ENCODE measurements at regions of chr11 and their contacts with region 1.

Region 1: GRCh38 chr11:18540207-18541009 is 13.7 kb upstream of the TSG101 start:
- DNase-seq: peak in 2 of 9 experiments; percentile 52 to 64
- ATAC-seq: peak; percentile 63
- H3K4me3 ChIP-seq: no peak overlapping the region
- H3K4me3 Mint-ChIP-seq: no peak overlapping the region
- H3K27ac ChIP-seq: no peak overlapping the region
- H3K27ac Mint-ChIP-seq: no peak overlapping the region
- H3K4me1 ChIP-seq: no peaks in the 10 kb centered on the region
- H3K4me1 Mint-ChIP-seq: no peaks in the 10 kb centered on the region
- H3K27me3 ChIP-seq: no peaks in the 10 kb centered on the region
- H3K27me3 Mint-ChIP-seq: no peaks in the 10 kb centered on the region
- CTCF ChIP-seq: peak; percentile 59

Region 2: DNA sequence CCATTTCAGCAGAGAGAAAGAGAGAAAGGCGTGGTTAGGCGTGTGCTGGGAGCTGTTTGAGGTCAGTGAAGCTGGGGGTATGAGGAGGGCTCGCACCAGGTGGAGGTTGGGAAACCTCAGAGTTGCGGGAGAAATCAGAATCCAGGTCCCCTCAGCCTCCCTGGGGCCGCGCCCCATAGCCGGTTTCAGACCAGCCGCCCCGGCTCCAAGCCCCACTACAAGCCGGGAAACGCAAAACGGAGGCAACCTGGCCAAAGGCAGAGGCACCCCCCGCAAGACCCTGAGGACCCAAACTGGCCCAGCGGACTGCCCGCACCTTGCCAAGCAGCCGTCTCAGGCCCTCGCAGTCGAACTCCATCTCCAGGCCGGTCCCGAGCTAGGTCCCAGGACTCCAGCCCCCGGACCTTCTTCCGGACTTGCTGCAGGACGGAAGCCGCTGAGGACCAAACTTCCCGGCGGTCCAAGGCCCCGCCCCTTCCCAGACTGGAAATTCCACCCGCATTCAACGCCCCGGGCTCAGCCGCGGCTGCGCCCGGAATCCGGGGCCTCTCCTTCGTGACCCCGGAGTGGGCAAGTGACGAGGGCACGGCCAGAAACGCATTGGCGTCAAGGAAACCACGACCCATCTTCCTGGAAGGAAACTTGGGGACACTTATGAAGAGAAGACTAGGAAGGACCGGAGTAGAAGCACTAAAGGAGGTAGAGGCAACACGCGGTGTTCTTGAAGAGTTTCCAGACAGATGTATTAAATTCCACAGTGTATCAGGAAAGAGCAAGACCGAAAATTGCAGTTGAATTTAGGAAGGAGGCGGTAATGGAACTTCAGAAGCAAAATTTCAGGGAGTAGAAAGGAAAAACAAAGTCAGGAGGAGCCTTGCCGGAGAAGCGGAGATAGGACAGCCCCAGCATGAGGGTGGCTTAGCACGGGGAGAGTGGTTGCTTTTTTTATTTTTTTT is 48.2 kb after region 1 on chr11 and contains the start of gene UEVLD:
- CTCF ChIA-PET with region 1: interaction called, 4 read pairs
- POLR2A ChIA-PET with region 1: no interaction called
- intact Hi-C with region 1: loop called in 1 of 2 experiments (anchors 5 kb)
- DNase-seq: peak; percentile 5 to 85 (median 44)
- ATAC-seq: peak; percentile 55
- H3K4me3 ChIP-seq: peak within 1 kb of the TSS; percentile 75 to 92
- H3K4me3 Mint-ChIP-seq: no peak within 1 kb of the TSS
- H3K27ac ChIP-seq: peak within 1 kb of the TSS; percentile 57 to 92
- H3K27ac Mint-ChIP-seq: no peak within 1 kb of the TSS
- H3K4me1 ChIP-seq: peaks cover 17% of the 10 kb centered on the region
- H3K4me1 Mint-ChIP-seq: peaks cover 10% of the 10 kb centered on the region
- H3K27me3 ChIP-seq: no peaks in the 10 kb centered on the region
- H3K27me3 Mint-ChIP-seq: no peaks in the 10 kb centered on the region
- CTCF ChIP-seq: no peak
- total RNA-seq, gene UEVLD: 1.1 to 2.1 TPM

Region 3: GRCh38 chr11:18669220-18669598 is 128.8 kb after region 1 on chr11:
- CTCF ChIA-PET with region 1: no interaction called
- POLR2A ChIA-PET with region 1: no interaction called
- intact Hi-C with region 1: no loop called
- DNase-seq: peak in 4 of 9 experiments; percentile 2 to 17 (median 16)
- ATAC-seq: no peak
- H3K4me3 ChIP-seq: no peak overlapping the region
- H3K4me3 Mint-ChIP-seq: no peak overlapping the region
- H3K27ac ChIP-seq: no peak overlapping the region
- H3K27ac Mint-ChIP-seq: peak overlapping the region; percentile 7
- H3K4me1 ChIP-seq: peaks cover 37% of the 10 kb centered on the region
- H3K4me1 Mint-ChIP-seq: peaks cover 53% of the 10 kb centered on the region
- H3K27me3 ChIP-seq: no peaks in the 10 kb centered on the region
- H3K27me3 Mint-ChIP-seq: no peaks in the 10 kb centered on the region
- CTCF ChIP-seq: no peak

Region 4: DNA sequence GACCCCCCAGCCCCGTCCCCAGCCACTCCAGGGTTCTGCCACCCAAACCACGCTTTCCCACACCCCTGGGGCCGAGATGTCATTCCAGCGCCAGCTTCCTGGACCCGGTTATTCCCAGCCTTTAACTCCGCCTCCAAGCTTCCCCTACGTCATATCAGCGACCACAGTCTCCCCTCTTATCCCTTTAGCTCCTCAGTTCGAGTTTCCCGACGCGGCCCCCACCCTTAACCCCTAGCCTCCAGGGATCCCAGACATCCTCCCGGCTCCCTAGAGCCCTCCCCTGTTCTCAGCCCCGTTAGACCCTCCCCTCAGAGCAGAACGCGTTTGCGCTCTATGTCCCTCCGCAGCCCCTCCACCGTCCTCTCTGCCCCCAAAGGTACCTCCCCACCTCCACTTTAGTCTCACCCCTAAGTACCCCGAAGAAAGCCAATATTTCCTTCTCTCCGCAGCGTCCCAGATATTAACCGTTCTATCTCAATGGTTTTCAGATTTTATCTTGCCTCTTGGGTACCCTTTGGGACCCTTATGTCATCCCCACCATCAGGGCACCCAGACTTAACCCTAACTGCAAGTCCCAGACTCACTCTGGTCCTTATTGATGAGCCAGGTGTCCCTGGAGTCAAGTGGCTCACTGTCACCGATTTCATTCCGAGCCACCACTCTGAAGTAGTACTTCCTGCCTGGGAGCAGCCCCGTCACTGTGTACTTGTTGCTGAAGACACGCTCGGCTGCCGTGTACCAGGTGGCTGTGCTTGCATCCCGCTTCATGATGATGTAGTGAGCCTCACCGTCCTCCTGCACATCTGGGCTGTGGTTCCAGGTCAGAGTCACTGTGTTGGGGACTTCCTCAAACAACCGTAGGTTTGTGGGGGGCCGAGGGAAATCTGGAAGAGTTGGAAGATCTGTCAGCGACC is 166.2 kb after region 1 on chr11:
- CTCF ChIA-PET with region 1: interaction called, 10 read pairs
- POLR2A ChIA-PET with region 1: no interaction called
- intact Hi-C with region 1: no loop called
- DNase-seq: peak; percentile 29 to 83 (median 57)
- ATAC-seq: peak; percentile 81
- H3K4me3 ChIP-seq: peak overlapping the region; percentile 55 to 83
- H3K4me3 Mint-ChIP-seq: peak overlapping the region; percentile 94
- H3K27ac ChIP-seq: peak overlapping the region; percentile 39 to 56
- H3K27ac Mint-ChIP-seq: peak overlapping the region; percentile 94
- H3K4me1 ChIP-seq: peaks cover 7% of the 10 kb centered on the region
- H3K4me1 Mint-ChIP-seq: peaks cover 22% of the 10 kb centered on the region
- H3K27me3 ChIP-seq: no peaks in the 10 kb centered on the region
- H3K27me3 Mint-ChIP-seq: no peaks in the 10 kb centered on the region
- CTCF ChIP-seq: no peak

Region 5: DNA sequence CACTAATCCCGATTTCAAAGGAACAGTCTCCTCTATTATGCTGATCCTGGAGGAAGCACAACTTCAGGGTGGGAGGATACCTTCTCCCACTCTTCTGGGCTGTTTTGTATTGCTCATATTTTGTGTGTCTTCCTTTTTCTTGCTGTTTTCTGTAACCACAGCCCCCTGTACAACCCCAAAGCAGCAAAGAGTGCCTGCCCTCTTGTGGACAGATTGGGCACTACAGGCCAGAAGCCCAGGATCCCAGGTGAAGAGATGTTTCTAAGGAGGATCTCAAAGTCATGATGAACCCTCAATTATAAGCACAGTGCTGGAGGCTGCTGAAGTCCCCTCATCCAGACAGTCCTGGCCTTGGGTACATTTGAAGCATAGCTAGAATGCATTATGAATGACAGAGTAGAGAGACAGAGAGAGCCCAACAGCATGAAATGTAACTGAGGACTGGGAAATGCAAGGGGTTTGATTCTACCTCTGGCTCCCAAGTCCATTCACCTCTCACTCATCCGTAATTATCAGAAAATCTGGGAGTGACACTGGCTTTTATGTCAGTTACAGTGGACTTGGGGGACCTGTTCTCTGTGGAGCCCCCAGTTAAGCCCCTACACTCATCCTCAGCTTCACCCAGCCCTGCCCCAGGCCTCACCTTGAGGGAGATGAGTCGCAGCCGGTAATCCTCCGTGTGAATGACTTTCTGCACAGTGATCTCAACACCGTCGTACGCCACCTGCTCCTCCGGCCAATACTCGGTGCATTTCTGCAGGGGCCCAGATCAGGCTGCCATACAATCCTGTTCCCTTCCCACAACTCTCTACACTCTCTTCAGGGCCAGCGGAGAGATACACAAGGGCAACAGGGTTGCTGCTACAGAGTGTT is 191.8 kb after region 1 on chr11:
- CTCF ChIA-PET with region 1: interaction called, 100 read pairs
- POLR2A ChIA-PET with region 1: interaction called, 4 read pairs
- intact Hi-C with region 1: loop called (anchors 1 kb)
- DNase-seq: peak; percentile 54 to 82 (median 73)
- ATAC-seq: peak; percentile 87
- H3K4me3 ChIP-seq: no peak overlapping the region
- H3K4me3 Mint-ChIP-seq: no peak overlapping the region
- H3K27ac ChIP-seq: no peak overlapping the region
- H3K27ac Mint-ChIP-seq: no peak overlapping the region
- H3K4me1 ChIP-seq: peaks cover 9% of the 10 kb centered on the region
- H3K4me1 Mint-ChIP-seq: peaks cover 11% of the 10 kb centered on the region
- H3K27me3 ChIP-seq: no peaks in the 10 kb centered on the region
- H3K27me3 Mint-ChIP-seq: no peaks in the 10 kb centered on the region
- CTCF ChIP-seq: peak; percentile 97

Region 6: GRCh38 chr11:18757811-18758210 is 217.4 kb after region 1 on chr11:
- CTCF ChIA-PET with region 1: interaction called, 15 read pairs
- POLR2A ChIA-PET with region 1: no interaction called
- intact Hi-C with region 1: no loop called
- DNase-seq: no peak
- ATAC-seq: no peak
- H3K4me3 ChIP-seq: no peak overlapping the region
- H3K4me3 Mint-ChIP-seq: no peak overlapping the region
- H3K27ac ChIP-seq: no peak overlapping the region
- H3K27ac Mint-ChIP-seq: no peak overlapping the region
- H3K4me1 ChIP-seq: no peaks in the 10 kb centered on the region
- H3K4me1 Mint-ChIP-seq: no peaks in the 10 kb centered on the region
- H3K27me3 ChIP-seq: no peaks in the 10 kb centered on the region
- H3K27me3 Mint-ChIP-seq: peaks cover 7% of the 10 kb centered on the region
- CTCF ChIP-seq: no peak

Region 7: DNA sequence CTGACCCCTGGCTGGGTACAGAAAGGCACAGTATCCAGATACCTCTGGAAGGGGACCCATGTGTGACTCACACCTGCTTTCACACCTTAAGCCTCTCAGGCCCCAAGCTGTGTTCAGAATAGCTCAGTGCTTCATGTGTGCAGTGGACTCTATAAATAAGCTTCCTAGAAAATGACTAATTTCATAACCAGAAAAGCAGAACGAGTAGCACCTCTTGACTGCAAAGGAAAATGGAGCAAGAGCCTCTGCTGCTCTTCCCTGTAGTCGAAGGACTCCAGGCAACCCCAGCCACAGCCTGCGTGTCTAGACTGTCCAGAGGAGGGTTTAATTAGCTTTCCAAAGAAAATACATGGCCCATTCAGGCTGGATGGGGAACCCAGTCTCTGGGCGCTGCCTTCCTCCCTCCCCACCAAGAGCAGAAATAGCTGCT is 228.1 kb after region 1 on chr11:
- CTCF ChIA-PET with region 1: interaction called, 15 read pairs
- POLR2A ChIA-PET with region 1: no interaction called
- intact Hi-C with region 1: loop called (anchors 1 kb)
- DNase-seq: no peak
- ATAC-seq: no peak
- H3K4me3 ChIP-seq: no peak overlapping the region
- H3K4me3 Mint-ChIP-seq: no peak overlapping the region
- H3K27ac ChIP-seq: no peak overlapping the region
- H3K27ac Mint-ChIP-seq: no peak overlapping the region
- H3K4me1 ChIP-seq: no peaks in the 10 kb centered on the region
- H3K4me1 Mint-ChIP-seq: peaks cover 4% of the 10 kb centered on the region
- H3K27me3 ChIP-seq: no peaks in the 10 kb centered on the region
- H3K27me3 Mint-ChIP-seq: peaks cover 20% of the 10 kb centered on the region
- CTCF ChIP-seq: no peak

Region 8: GRCh38 chr11:18791207-18791968 is 251.0 kb after region 1 on chr11 and contains the start of gene PTPN5:
- CTCF ChIA-PET with region 1: no interaction called
- POLR2A ChIA-PET with region 1: no interaction called
- intact Hi-C with region 1: no loop called
- DNase-seq: no peak
- ATAC-seq: no peak
- H3K4me3 ChIP-seq: no peak within 1 kb of the TSS
- H3K4me3 Mint-ChIP-seq: no peak within 1 kb of the TSS
- H3K27ac ChIP-seq: no peak within 1 kb of the TSS
- H3K27ac Mint-ChIP-seq: no peak within 1 kb of the TSS
- H3K4me1 ChIP-seq: no peaks in the 10 kb centered on the region
- H3K4me1 Mint-ChIP-seq: peaks cover 1% of the 10 kb centered on the region
- H3K27me3 ChIP-seq: peaks cover 4 to 7% of the 10 kb centered on the region in 2 experiments
- H3K27me3 Mint-ChIP-seq: peaks cover 50% of the 10 kb centered on the region
- CTCF ChIP-seq: no peak
- total RNA-seq, gene PTPN5: not detected